MCF 10A (cell line): ENCODE measurements at regions of chr7 and their contacts with region 1.

Region 1: DNA sequence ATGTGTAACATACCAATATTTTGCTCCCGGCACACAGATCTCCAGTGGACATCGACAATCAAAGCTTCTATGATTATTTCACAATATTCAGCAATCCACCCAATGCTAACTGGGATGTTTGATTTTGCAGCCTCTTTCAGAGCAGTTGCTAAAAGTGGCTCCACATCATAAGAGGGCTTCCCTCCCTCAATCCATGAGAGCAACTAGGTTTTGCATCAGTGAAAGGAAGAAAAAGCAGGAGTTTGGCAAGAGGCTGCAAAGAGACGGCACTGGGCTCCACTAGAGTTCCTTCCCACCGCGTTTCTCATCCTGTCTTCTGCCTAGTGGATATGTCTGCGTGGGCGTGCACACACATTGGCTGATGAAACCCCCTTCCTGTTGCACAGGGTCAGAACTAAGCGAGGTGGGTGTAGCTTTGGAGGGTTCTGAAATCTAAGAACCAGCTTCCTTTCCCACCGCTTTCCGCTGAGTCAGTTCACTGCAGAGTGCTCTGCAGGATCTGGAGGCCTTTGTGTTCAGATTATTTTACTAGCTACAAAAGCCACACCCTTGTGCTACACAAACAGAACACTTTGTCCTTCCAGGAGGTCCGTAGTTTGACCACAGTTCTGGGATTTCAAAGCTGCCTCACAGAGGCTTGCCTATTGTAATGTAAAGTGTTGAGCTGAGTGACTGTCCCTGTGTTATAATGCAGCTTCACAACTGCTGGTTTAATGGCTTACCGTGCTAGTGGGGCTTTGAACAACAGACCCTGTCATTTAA is 28.1 kb downstream of the ARL4A start:
- DNase-seq: peak; percentile 98
- H3K4me3 Mint-ChIP-seq: peak overlapping the region; percentile 76
- H3K27ac Mint-ChIP-seq: peak overlapping the region; percentile 92
- H3K4me1 Mint-ChIP-seq: peaks cover 53% of the 10 kb centered on the region
- H3K27me3 Mint-ChIP-seq: no peaks in the 10 kb centered on the region
- CTCF ChIP-seq: no peak

Region 2: DNA sequence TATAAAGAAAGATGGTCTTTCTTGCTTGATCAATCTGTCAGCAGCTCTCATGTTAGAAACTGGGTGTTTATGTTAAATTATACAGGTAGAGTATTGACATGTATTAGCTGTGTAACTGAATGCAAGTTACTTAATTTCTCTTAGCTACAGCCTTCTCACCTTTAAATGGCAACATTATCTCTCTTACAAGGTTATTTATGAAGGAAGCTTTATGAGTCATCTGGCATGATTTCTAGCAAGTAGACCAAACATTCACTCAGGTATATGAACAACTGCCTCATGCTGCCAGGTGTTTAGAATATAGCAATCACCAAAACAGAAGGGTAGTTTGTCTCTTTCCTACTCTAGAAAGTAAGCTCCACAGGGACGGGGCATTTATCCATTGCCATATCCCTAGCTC is 19.6 kb before region 1 on chr7:
- CTCF ChIA-PET with region 1: interaction called, 6 read pairs
- POLR2A ChIA-PET with region 1: interaction called, 159 read pairs
- intact Hi-C with region 1: no loop called
- DNase-seq: peak; percentile 68
- H3K4me3 Mint-ChIP-seq: no peak overlapping the region
- H3K27ac Mint-ChIP-seq: peak overlapping the region; percentile 79
- H3K4me1 Mint-ChIP-seq: peaks cover 27% of the 10 kb centered on the region
- H3K27me3 Mint-ChIP-seq: no peaks in the 10 kb centered on the region
- CTCF ChIP-seq: no peak

Region 3: GRCh38 chr7:12729112-12729511 is 13.6 kb after region 1 on chr7:
- CTCF ChIA-PET with region 1: interaction called, 5 read pairs
- POLR2A ChIA-PET with region 1: interaction called, 17 read pairs
- intact Hi-C with region 1: no loop called
- DNase-seq: peak; percentile 73
- H3K4me3 Mint-ChIP-seq: peak overlapping the region; percentile 38
- H3K27ac Mint-ChIP-seq: peak overlapping the region; percentile 40
- H3K4me1 Mint-ChIP-seq: peaks cover 30% of the 10 kb centered on the region
- H3K27me3 Mint-ChIP-seq: no peaks in the 10 kb centered on the region
- CTCF ChIP-seq: no peak

Region 4: GRCh38 chr7:12802098-12802497 is 86.5 kb after region 1 on chr7:
- CTCF ChIA-PET with region 1: interaction called, 4 read pairs
- POLR2A ChIA-PET with region 1: interaction called, 10 read pairs
- intact Hi-C with region 1: no loop called
- DNase-seq: peak; percentile 37
- H3K4me3 Mint-ChIP-seq: no peak overlapping the region
- H3K27ac Mint-ChIP-seq: peak overlapping the region; percentile 68
- H3K4me1 Mint-ChIP-seq: peaks cover 36% of the 10 kb centered on the region
- H3K27me3 Mint-ChIP-seq: no peaks in the 10 kb centered on the region
- CTCF ChIP-seq: no peak

Region 5: GRCh38 chr7:12929476-12930140 is 214.1 kb after region 1 on chr7:
- CTCF ChIA-PET with region 1: interaction called, 3 read pairs
- POLR2A ChIA-PET with region 1: no interaction called
- intact Hi-C with region 1: loop called (anchors 10 kb)
- DNase-seq: no peak
- H3K4me3 Mint-ChIP-seq: no peak overlapping the region
- H3K27ac Mint-ChIP-seq: no peak overlapping the region
- H3K4me1 Mint-ChIP-seq: peaks cover 17% of the 10 kb centered on the region
- H3K27me3 Mint-ChIP-seq: no peaks in the 10 kb centered on the region
- CTCF ChIP-seq: no peak

Region 6: DNA sequence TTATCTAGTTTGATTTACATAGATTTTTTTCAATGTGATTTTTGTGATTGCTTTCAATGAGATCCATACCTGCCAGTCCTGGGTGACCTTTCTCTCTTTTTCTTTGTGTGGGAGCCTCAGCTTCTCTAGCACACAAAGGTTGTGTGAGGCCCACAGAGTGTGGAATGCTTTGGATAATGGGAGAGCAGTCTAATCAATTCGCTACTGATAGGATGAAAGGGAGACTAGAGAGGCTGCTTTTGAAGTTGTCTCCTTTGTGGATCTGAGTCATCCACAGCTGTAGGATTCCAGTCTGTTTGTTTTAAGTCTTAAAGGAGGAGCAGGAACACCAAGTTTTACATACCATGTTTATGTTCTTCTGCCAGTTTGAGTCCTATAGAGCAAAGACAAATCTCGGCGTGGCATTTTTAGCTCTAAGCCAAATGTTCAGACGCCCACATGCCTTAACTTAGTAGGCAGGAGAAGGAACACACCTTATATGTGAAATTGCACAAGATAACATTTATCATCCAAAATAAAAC is 301.8 kb after region 1 on chr7:
- CTCF ChIA-PET with region 1: interaction called, 3 read pairs
- POLR2A ChIA-PET with region 1: interaction called, 13 read pairs
- intact Hi-C with region 1: no loop called
- DNase-seq: peak; percentile 83
- H3K4me3 Mint-ChIP-seq: peak overlapping the region; percentile 44
- H3K27ac Mint-ChIP-seq: peak overlapping the region; percentile 65
- H3K4me1 Mint-ChIP-seq: peaks cover 8% of the 10 kb centered on the region
- H3K27me3 Mint-ChIP-seq: no peaks in the 10 kb centered on the region
- CTCF ChIP-seq: no peak

Region 7: GRCh38 chr7:13179102-13179501 is 463.5 kb after region 1 on chr7:
- CTCF ChIA-PET with region 1: no interaction called
- POLR2A ChIA-PET with region 1: no interaction called
- intact Hi-C with region 1: no loop called
- DNase-seq: peak; percentile 23
- H3K4me3 Mint-ChIP-seq: no peak overlapping the region
- H3K27ac Mint-ChIP-seq: no peak overlapping the region
- H3K4me1 Mint-ChIP-seq: no peaks in the 10 kb centered on the region
- H3K27me3 Mint-ChIP-seq: no peaks in the 10 kb centered on the region
- CTCF ChIP-seq: no peak